ENCODE measurements at regions of chr9 and their contacts with region 1.

Region 1: DNA sequence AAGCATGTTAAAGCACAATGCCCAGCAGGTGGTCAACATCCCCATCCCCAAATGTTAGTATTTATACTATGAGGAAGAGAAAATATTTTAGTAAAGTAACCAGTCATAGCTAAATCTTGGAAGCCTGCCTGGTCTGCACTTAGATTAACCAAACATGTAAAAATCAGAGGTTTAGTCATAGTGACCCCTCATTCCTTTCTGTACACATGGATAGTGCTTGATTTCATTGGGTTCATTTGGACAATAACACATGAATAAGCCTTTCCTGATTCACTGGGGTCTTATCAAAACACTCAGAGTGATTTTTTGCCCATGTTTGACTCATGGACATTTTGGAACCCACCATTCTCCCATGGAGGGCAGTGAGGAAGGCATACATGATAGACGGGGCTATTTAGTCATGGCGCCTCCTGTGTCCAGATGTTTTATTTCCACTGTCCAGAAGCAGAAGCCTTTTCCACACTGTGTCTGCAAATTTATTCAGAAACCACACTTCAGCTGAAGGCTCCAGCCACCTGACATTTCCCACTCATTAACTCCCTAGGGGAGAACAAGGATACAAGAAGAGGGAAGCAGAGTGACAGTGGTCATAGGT is 32.5 kb downstream of the OR1J1 start:
- DNase-seq: no peak
- H3K4me3 ChIP-seq: no peak overlapping the region
- H3K27ac ChIP-seq: no peak overlapping the region
- H3K4me1 ChIP-seq: no peaks in the 10 kb centered on the region
- H3K27me3 ChIP-seq: no peaks in the 10 kb centered on the region
- CTCF ChIP-seq: no peak

Region 2: DNA sequence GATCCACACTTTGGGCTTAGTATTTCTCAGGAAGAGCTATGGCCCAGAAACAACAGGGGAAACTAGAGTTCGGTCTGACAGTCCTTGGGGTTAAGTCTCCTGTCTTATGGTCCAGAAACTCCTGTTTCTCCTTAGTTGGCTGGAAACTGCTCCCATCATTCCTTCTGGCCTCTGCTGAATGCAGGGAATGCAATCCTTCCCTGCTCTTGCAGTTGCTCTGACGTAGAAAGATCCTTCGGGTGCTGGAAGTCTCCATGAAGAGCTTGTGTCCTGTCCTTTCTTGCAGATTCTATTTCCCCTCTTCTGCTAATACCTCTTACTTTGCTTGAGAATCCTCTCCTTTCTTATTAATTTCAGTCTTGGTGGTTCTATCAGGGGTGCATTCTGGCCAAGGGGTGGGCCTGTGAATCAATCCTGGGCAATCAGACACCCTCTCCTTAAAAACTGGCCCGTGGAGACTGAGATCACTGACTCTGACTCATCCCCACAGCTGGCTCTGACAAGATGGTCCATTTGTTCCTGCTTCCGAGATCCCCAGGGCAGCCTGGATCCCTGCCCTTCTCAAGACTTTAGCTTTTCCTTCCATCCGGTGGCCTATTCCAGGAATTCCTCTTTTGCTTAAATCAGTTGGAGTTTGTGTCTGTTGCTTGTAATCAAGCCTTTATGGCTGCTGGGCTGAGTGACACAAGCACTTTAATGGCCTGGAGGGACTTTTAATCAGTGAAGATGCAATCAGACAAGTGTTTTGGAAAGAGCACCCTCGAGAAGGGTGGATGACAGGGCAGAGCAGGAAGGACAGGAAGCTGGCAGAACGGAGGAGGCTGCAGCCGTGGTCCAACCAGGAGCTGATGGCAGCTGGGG is 50.8 kb before region 1 on chr9:
- CTCF ChIA-PET with region 1: no interaction called
- dilution Hi-C with region 1: loop called (anchors 5 kb)
- in situ Hi-C with region 1: no loop called
- intact Hi-C with region 1: no loop called
- DNase-seq: peak; percentile 48
- H3K4me3 ChIP-seq: no peak overlapping the region
- H3K27ac ChIP-seq: no peak overlapping the region
- H3K4me1 ChIP-seq: peaks cover 25% of the 10 kb centered on the region
- H3K27me3 ChIP-seq: no peaks in the 10 kb centered on the region
- CTCF ChIP-seq: no peak